ENCODE measurements at regions of chr12 and their contacts with region 1.

Region 1: GRCh38 chr12:575948-576612 is 87.2 kb downstream of the NINJ2 start:
- DNase-seq: peak; percentile 56
- H3K4me3 ChIP-seq: no peak overlapping the region
- H3K27ac ChIP-seq: no peak overlapping the region
- H3K4me1 ChIP-seq: peaks cover 22% of the 10 kb centered on the region
- H3K27me3 ChIP-seq: no peaks in the 10 kb centered on the region
- CTCF ChIP-seq: peak; percentile 94 to 98
- POLR2A ChIP-seq: no peak

Region 2: DNA sequence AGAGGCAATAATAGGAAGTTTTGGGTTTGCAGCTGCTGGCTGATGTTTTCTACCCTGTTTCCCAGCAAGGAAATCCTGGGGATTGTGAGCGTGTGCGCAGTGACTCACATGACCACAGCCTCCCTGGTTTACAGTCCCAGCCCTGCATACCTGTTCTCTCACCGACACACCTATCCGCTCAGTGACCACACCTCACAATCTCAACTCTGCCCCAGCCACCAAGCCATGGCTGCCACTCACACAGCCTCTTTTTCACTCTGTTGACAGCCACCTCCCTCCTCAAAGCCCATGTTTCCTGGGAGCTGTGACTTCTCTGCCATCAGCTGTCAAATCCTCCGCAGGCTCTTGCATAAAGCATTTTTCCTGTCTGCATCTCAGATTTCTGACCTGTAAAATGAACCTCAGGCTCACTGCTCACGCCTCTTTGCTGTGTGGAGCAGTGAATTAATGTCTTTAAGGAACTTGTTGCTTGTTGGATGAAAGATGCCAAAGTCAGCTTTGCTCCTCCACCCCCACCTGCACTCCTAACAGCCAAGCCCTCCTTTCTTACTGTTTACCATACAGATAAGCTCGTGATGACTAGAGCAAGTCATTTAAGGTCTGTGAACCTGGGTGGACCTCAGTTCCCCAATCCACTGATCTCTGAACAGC is 72.8 kb before region 1 on chr12:
- CTCF ChIA-PET with region 1: no interaction called
- POLR2A ChIA-PET with region 1: no interaction called
- dilution Hi-C with region 1: no loop called
- intact Hi-C with region 1: no loop called
- DNase-seq: peak; percentile 13
- H3K4me3 ChIP-seq: no peak overlapping the region
- H3K27ac ChIP-seq: no peak overlapping the region
- H3K4me1 ChIP-seq: no peaks in the 10 kb centered on the region
- H3K27me3 ChIP-seq: peaks cover 6 to 15% of the 10 kb centered on the region in 2 experiments
- CTCF ChIP-seq: no peak
- POLR2A ChIP-seq: no peak

Region 3: DNA sequence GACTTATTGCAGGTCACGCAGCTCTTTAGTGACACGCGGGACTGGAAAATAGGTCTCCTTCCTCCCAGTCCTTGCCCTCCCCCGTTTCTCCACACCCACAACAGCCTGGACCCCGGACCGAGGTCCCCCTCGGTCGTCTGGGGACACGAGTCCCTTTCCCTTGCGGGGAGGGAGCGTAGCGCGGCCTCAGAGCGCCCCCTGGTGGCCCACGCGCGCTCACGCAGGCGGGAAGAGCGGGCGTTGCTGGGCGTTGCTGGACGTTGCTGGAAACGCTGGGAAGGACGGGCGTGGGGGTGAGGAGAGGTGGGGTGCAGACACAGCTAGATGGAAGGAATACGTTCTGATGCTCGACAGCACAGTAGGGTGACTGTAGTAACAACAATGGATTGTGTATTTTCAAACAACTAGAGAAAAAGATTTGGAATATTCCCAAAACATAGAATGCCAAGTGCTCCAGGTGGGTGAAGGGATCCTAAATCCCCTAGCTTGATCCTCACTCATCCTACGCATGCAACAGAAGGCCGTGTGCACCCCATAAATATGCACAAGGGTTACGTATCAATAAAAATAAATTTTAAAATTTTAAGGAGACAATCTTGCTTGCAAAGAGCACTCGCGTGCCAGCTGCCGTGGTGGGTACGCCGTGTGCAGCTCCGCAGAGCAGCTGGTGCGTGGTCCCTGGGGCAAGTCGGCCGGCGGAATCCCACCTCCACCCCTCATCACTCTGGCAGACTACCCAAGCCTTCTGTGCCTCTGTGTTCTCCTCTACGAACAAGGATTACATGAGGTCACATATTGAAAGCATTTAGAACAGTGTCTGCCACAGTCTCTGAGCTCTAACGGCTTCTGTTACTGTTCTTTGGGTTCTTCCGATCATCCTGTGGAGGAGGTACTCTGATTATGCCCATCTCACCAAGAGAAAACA is 28.9 kb before region 1 on chr12:
- CTCF ChIA-PET with region 1: no interaction called
- POLR2A ChIA-PET with region 1: no interaction called
- dilution Hi-C with region 1: no loop called
- intact Hi-C with region 1: no loop called
- DNase-seq: peak; percentile 61
- H3K4me3 ChIP-seq: no peak overlapping the region
- H3K27ac ChIP-seq: no peak overlapping the region
- H3K4me1 ChIP-seq: peaks cover 9% of the 10 kb centered on the region
- H3K27me3 ChIP-seq: peaks cover 0 to 10% of the 10 kb centered on the region in 2 experiments
- CTCF ChIP-seq: peak; percentile 98
- POLR2A ChIP-seq: no peak

Region 4: DNA sequence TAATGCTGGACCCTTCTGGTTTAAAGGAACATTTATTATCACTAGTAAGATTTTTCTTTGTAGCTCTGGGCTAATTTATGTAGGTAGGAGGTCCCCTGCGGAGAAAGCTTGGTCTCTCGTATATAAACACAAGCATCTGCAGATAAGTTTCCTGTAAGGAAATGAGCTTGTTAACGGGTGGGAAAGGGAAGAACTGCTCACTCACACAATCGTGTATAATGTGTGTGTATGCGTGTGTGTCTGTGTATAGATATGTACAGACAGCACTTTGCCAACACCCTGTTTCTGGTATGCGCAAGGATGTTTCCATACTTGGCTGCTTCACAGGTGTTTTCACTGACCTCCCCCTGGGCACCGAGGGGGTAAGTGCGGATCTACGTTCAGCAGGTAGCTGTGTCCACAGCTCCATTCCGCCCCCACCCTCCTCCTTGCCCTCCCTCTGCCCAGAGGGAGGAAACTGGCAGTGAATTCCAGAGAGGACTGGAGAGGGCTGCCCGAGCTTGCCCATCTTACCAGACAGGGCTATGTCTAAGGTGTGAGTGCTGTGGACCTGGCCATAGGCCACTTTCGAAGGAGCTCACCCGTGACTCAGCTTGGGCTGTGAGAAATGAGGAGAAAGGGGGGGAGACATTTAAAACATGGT is 22.0 kb after region 1 on chr12:
- CTCF ChIA-PET with region 1: interaction called, 18 read pairs
- POLR2A ChIA-PET with region 1: interaction called, 18 read pairs
- dilution Hi-C with region 1: no loop called
- intact Hi-C with region 1: no loop called
- DNase-seq: peak; percentile 91
- H3K4me3 ChIP-seq: peak overlapping the region in 1 of 3 experiments; percentile 1
- H3K27ac ChIP-seq: peak overlapping the region; percentile 63
- H3K4me1 ChIP-seq: peaks cover 13% of the 10 kb centered on the region
- H3K27me3 ChIP-seq: peaks cover 3 to 5% of the 10 kb centered on the region in 2 experiments
- CTCF ChIP-seq: no peak
- POLR2A ChIP-seq: no peak

Region 5: GRCh38 chr12:614411-614970 is 38.4 kb after region 1 on chr12:
- CTCF ChIA-PET with region 1: interaction called, 18 read pairs
- POLR2A ChIA-PET with region 1: no interaction called
- dilution Hi-C with region 1: no loop called
- intact Hi-C with region 1: loop called (anchors 1 kb)
- DNase-seq: peak; percentile 45
- H3K4me3 ChIP-seq: no peak overlapping the region
- H3K27ac ChIP-seq: no peak overlapping the region
- H3K4me1 ChIP-seq: peaks cover 23% of the 10 kb centered on the region
- H3K27me3 ChIP-seq: no peaks in the 10 kb centered on the region
- CTCF ChIP-seq: peak in 1 of 2 donors; percentile 48
- POLR2A ChIP-seq: no peak

Region 6: GRCh38 chr12:642633-643474 is 66.8 kb after region 1 on chr12:
- CTCF ChIA-PET with region 1: interaction called, 15 read pairs
- POLR2A ChIA-PET with region 1: no interaction called
- dilution Hi-C with region 1: no loop called
- intact Hi-C with region 1: loop called (anchors 1 kb)
- DNase-seq: peak; percentile 52
- H3K4me3 ChIP-seq: peak overlapping the region in 1 of 3 experiments; percentile 40
- H3K27ac ChIP-seq: peak overlapping the region; percentile 87
- H3K4me1 ChIP-seq: peaks cover 41% of the 10 kb centered on the region
- H3K27me3 ChIP-seq: no peaks in the 10 kb centered on the region
- CTCF ChIP-seq: peak; percentile 1 to 35
- POLR2A ChIP-seq: peak; percentile 66

Region 7: DNA sequence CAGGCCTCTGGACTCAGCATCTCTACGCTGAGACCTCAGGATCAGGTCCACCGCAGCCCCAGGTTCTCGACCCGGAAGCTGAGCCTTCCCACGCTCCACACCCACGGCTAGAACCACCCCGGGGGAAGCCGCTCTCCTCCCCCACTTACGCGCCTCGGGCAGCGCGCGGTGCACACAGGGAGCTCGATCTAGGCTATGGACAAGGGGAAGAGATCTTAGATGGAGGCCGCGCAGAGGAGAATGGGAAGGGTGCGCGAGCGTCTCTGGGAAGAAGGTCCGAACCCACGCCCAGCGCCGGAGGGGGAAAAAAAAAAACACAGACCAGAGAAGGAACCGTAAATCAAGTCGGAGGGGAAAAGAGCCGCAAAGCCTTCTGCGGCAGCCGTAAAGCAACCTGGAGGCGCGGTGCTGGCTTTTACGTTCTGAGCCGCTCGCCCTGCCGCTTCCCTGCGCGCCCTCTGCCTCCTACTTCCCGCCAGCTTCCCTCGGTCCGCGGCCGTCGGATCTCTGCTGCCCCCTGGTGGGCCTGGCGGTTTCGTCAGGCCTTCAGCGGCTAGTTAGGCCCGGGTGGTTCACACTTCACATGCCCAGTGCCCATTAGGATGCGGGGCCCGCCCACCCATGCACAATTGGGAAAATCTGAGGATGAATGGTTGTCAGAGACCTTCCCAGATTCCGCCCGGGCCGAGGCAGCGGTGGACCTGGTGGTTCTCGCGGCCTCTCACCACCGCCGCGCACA is 373.5 kb after region 1 on chr12 and contains the start of gene RAD52:
- CTCF ChIA-PET with region 1: interaction called, 52 read pairs
- POLR2A ChIA-PET with region 1: interaction called, 5 read pairs
- dilution Hi-C with region 1: no loop called
- intact Hi-C with region 1: loop called (anchors 1 kb)
- DNase-seq: peak; percentile 99
- H3K4me3 ChIP-seq: peak within 1 kb of the TSS; percentile 67 to 81 (median 76)
- H3K27ac ChIP-seq: peak within 1 kb of the TSS; percentile 41
- H3K4me1 ChIP-seq: peaks cover 15% of the 10 kb centered on the region
- H3K27me3 ChIP-seq: no peaks in the 10 kb centered on the region
- CTCF ChIP-seq: peak; percentile 93 to 97
- POLR2A ChIP-seq: no peak
- total RNA-seq, gene RAD52: 10.2 and 16.1 TPM in 2 replicates

Region 8: GRCh38 chr12:1350055-1350933 is 774.2 kb after region 1 on chr12:
- CTCF ChIA-PET with region 1: no interaction called
- POLR2A ChIA-PET with region 1: no interaction called
- dilution Hi-C with region 1: no loop called
- intact Hi-C with region 1: no loop called
- DNase-seq: no peak
- H3K4me3 ChIP-seq: no peak overlapping the region
- H3K27ac ChIP-seq: no peak overlapping the region
- H3K4me1 ChIP-seq: peaks cover 8% of the 10 kb centered on the region
- H3K27me3 ChIP-seq: no peaks in the 10 kb centered on the region
- CTCF ChIP-seq: no peak
- POLR2A ChIP-seq: no peak